HCT116 (cell line): ENCODE measurements at regions of chr1 and their contacts with region 1.

Region 1: DNA sequence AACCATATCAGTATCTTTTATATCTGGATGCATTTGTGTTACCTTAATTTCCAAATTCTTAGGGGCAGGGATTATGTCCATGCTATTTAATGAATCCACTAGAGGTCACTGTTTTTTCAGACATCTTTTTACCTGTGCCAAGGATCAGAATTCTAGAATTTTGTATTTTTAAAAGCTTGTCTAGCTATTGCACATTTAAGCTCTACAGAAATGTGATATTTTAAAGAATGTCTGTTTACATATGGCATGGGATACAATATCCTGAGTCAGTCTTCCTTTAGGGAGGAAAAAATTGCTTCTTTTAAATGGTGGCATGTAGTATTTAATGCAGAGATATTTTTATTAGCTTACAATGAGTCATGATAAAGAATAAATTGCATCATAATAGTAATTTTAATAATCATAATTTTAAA is 11.3 kb downstream of the RPAP2 start:
- DNase-seq: no peak
- ATAC-seq: peak; percentile 57; the same call in 1 of the 2 replicates
- H3K4me3 ChIP-seq: no peak overlapping the region
- H3K27ac ChIP-seq: no peak overlapping the region
- H3K4me1 ChIP-seq: no peaks in the 10 kb centered on the region
- H3K27me3 ChIP-seq: no peaks in the 10 kb centered on the region
- CTCF ChIP-seq: peak; percentile 43 to 74 (median 66)
- POLR2A ChIP-seq: no peak
- RAD21 ChIP-seq: peak; percentile 75

Region 2: DNA sequence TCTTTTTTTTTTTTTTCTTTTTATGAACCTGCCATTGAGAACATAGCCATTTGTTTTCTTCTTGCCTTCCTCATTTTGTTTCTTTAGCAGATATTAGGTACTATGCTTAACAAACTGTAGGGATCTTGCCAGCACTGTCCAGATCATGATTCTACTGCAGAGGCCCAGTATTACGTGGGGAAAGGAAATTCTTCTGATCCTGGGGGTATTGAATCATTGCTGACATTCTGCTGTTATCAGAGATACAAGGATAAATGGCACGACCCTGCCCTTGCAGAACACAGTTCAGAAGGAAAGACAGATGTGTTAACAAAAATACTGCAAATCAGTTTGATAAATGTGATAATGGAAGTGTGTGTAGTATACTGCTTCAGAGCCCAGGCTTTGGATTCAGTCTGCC is 173.8 kb before region 1 on chr1:
- CTCF ChIA-PET with region 1: no interaction called
- POLR2A ChIA-PET with region 1: no interaction called
- RAD21 ChIA-PET with region 1: no interaction called
- intact Hi-C with region 1: no loop called
- DNase-seq: no peak
- ATAC-seq: no peak
- H3K4me3 ChIP-seq: no peak overlapping the region
- H3K27ac ChIP-seq: no peak overlapping the region
- H3K4me1 ChIP-seq: no peaks in the 10 kb centered on the region
- H3K27me3 ChIP-seq: no peaks in the 10 kb centered on the region
- CTCF ChIP-seq: no peak
- POLR2A ChIP-seq: no peak
- RAD21 ChIP-seq: no peak

Region 3: DNA sequence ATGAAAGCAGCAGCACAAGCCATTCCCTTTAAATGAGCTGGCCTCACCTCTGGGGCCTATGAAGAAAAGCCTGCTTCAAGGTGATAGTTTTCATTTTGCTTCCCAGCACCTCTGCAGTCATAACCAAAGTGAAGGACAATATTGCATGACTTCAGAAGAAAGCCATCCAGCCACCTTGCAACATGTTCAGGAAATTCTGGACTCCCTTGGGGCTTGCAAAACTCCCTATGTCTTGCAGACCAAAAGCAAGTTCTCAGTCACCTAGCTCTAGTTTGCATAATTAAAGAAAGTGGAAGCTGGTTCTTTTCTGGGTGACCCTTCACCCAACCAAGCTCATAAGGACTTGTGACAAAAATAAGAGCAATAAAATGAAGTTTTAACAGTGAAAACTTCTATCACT is 88.9 kb after region 1 on chr1:
- CTCF ChIA-PET with region 1: no interaction called
- POLR2A ChIA-PET with region 1: no interaction called
- RAD21 ChIA-PET with region 1: no interaction called
- intact Hi-C with region 1: no loop called
- DNase-seq: no peak
- ATAC-seq: no peak
- H3K4me3 ChIP-seq: no peak overlapping the region
- H3K27ac ChIP-seq: no peak overlapping the region
- H3K4me1 ChIP-seq: no peaks in the 10 kb centered on the region
- H3K27me3 ChIP-seq: no peaks in the 10 kb centered on the region
- CTCF ChIP-seq: no peak
- POLR2A ChIP-seq: no peak
- RAD21 ChIP-seq: no peak

Region 4: DNA sequence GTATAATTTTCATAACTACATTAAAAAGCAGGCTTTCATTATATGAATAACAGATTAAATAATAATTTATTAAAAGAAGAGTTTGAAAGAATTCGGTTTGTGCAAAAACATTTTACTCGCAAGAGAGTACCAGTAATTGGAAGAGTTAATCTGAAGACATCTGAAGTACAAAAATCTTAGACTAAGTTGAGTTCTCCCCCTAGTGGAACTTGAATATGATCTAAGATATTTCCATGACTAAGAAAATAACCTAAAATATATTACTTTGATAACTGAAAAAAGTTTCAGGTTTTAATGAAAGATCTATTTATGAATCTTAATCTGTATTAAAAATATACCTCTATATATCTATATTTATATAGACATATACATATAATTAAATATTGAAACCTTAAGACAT is 289.0 kb after region 1 on chr1:
- CTCF ChIA-PET with region 1: interaction called, 8 read pairs
- POLR2A ChIA-PET with region 1: no interaction called
- RAD21 ChIA-PET with region 1: no interaction called
- intact Hi-C with region 1: loop called (anchors 2 kb)
- DNase-seq: peak; percentile 23
- ATAC-seq: no peak
- H3K4me3 ChIP-seq: no peak overlapping the region
- H3K27ac ChIP-seq: no peak overlapping the region
- H3K4me1 ChIP-seq: no peaks in the 10 kb centered on the region
- H3K27me3 ChIP-seq: no peaks in the 10 kb centered on the region
- CTCF ChIP-seq: peak; percentile 33 to 54 (median 35); a peak in 3 of 6 replicates
- POLR2A ChIP-seq: no peak
- RAD21 ChIP-seq: peak; percentile 64

Region 5: GRCh38 chr1:92623187-92623778 is 313.1 kb after region 1 on chr1:
- CTCF ChIA-PET with region 1: interaction called, 7 read pairs
- POLR2A ChIA-PET with region 1: no interaction called
- RAD21 ChIA-PET with region 1: no interaction called
- intact Hi-C with region 1: loop called (anchors 1 kb)
- DNase-seq: peak; percentile 1
- ATAC-seq: peak; percentile 75
- H3K4me3 ChIP-seq: no peak overlapping the region
- H3K27ac ChIP-seq: no peak overlapping the region
- H3K4me1 ChIP-seq: no peaks in the 10 kb centered on the region
- H3K27me3 ChIP-seq: no peaks in the 10 kb centered on the region
- CTCF ChIP-seq: peak; percentile 19 to 53 (median 35); a peak in 4 of 6 replicates
- POLR2A ChIP-seq: no peak
- RAD21 ChIP-seq: peak; percentile 68

Region 6: DNA sequence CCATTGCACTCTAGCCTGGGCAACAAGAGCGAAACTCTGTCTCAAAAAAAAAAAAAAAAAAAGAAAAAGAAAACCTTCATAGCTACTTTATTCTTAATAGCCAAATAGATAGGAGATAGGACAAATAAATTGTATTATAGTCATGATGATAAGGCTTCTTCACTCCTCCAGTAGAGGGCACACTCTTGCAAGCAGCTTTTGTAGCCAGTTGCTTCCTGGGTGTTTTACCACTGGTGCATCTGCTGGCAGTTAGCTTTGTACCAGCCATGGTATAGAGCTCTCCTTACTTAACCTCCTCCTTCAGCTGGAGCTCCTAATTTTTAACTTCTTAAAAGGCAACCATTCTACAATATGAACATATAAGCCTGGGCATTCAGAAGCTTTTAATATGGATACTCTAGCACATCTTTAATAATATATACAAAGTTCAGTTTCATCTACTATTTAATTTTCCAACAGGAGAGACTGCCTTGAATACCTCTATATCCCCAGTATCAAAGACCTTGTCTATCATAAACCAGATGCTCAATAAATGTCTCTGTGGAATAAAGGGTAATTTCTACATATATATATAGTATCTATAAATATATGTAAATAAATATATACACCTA is 438.9 kb after region 1 on chr1:
- CTCF ChIA-PET with region 1: interaction called, 3 read pairs
- POLR2A ChIA-PET with region 1: no interaction called
- RAD21 ChIA-PET with region 1: no interaction called
- intact Hi-C with region 1: loop called (anchors 5 kb)
- DNase-seq: peak; percentile 51
- ATAC-seq: peak; percentile 89
- H3K4me3 ChIP-seq: no peak overlapping the region
- H3K27ac ChIP-seq: no peak overlapping the region
- H3K4me1 ChIP-seq: peaks cover 0 to 5% of the 10 kb centered on the region in 2 experiments; a peak in 2 of 4 replicates
- H3K27me3 ChIP-seq: no peaks in the 10 kb centered on the region
- CTCF ChIP-seq: peak; percentile 63 to 85 (median 70)
- POLR2A ChIP-seq: no peak
- RAD21 ChIP-seq: peak; percentile 73

Region 7: DNA sequence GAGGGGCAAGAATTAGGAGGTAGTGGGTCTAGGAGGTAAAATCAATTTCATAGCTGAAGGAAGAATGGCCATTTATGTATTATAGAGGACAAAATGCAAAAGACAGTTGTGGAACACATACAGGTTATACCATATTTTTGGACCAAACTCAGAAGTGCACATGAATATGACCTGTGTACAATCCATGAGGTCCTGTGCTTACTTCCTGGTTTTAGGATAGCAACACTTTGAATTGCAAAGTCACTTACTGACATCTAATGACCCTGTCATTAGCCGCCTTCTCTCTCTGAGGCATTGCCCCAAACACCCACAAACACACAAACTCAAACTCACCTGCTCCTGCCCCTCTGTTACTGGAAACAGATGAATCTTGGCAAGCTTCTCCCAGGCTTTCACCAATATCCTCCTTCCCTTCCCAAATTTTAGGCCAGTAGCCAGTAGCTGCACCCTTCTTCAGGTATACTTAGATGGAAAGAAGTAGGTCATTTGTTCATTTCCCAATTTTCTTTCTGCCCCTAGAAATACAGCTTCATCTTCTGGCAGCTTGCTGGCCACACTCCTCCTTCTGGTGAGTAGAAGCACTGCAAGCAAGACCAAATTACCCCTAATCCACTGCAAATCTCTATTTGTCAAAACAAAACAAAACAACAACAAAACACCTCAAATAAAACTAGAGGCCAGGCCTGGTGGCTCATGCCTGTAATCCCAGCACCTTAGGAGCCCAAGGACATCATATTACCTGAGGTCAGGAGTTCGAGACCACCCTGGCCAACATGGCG is 508.0 kb after region 1 on chr1:
- CTCF ChIA-PET with region 1: interaction called, 13 read pairs
- POLR2A ChIA-PET with region 1: no interaction called
- RAD21 ChIA-PET with region 1: interaction called, 3 to 7 read pairs
- intact Hi-C with region 1: loop called (anchors 2 kb)
- DNase-seq: peak; percentile 36
- ATAC-seq: peak; percentile 79
- H3K4me3 ChIP-seq: no peak overlapping the region
- H3K27ac ChIP-seq: no peak overlapping the region
- H3K4me1 ChIP-seq: peaks cover 0 to 15% of the 10 kb centered on the region in 2 experiments; a peak in 1 of 4 replicates
- H3K27me3 ChIP-seq: no peaks in the 10 kb centered on the region
- CTCF ChIP-seq: peak; percentile 63 to 78 (median 73)
- POLR2A ChIP-seq: no peak
- RAD21 ChIP-seq: peak; percentile 61